K562 (cell line): ENCODE measurements at regions of chr2 and their contacts with region 1.

Region 1: DNA sequence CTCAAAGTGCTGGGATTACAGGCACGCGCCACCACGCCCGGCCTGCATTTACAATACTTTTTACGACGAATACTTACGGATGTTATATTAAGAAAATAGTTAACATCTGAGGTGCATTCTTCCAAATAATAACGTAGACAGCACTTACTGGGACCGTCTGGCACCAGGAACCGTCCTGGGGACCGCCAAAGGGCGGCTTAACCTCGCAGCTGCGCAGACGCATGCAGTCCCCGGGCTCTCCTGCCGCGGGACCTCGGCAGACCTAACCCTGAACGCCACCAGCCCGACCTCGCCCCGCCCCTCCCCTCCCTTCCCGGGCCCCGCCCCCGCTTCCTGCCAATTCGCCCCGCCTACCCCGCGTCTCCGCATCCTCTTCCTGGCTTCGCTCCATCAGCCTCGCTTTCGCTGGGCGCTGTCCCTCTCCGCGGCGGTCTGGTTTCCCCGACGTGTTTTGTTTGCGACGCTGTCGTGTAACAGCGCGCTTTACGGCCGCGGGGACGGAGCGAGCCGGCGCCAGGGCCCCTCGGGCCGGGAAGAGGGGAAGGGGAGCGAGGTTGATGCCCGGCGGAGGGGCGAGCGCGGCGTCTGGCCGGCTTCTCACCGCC is at the start of gene CNOT11:
- DNase-seq: peak; percentile 95 to 98 (median 96)
- ATAC-seq: peak; percentile 96
- H3K4me3 ChIP-seq: peak within 1 kb of the TSS; percentile 97
- H3K27ac ChIP-seq: peak within 1 kb of the TSS; percentile 89
- H3K4me1 ChIP-seq: peaks cover 22 to 24% of the 10 kb centered on the region in 2 experiments
- H3K27me3 ChIP-seq: no peaks in the 10 kb centered on the region
- CTCF ChIP-seq: no peak
- EP300 ChIP-seq: no peak
- POLR2A ChIP-seq: peak; percentile 96
- RAD21 ChIP-seq: peak in 1 of 2 experiments; percentile 6; a peak in 1 of 4 replicates
- polyA plus RNA-seq, gene CNOT11: 12.7 to 13.2 TPM

Region 2: GRCh38 chr2:101151141-101151858 is 101.2 kb before region 1 on chr2 and contains the start of gene TBC1D8:
- CTCF ChIA-PET with region 1: no interaction called
- POLR2A ChIA-PET with region 1: no interaction called
- in situ Hi-C with region 1: no loop called
- intact Hi-C with region 1: loop called (anchors 5 kb)
- DNase-seq: peak; percentile 84 to 97 (median 94)
- ATAC-seq: peak; percentile 92
- H3K4me3 ChIP-seq: peak within 1 kb of the TSS; percentile 50
- H3K27ac ChIP-seq: no peak within 1 kb of the TSS
- H3K4me1 ChIP-seq: peaks cover 2 to 15% of the 10 kb centered on the region in 2 experiments; a peak in 4 of 5 replicates
- H3K27me3 ChIP-seq: peaks cover 41 to 64% of the 10 kb centered on the region in 2 experiments
- CTCF ChIP-seq: no peak
- EP300 ChIP-seq: no peak
- POLR2A ChIP-seq: peak; percentile 57
- RAD21 ChIP-seq: 0 out of 4 replicates have a peak, but pooled peaks of 1 of the 2 experiments have one; percentile 10
- polyA plus RNA-seq, gene TBC1D8: 0.41 to 0.70 TPM

Region 3: DNA sequence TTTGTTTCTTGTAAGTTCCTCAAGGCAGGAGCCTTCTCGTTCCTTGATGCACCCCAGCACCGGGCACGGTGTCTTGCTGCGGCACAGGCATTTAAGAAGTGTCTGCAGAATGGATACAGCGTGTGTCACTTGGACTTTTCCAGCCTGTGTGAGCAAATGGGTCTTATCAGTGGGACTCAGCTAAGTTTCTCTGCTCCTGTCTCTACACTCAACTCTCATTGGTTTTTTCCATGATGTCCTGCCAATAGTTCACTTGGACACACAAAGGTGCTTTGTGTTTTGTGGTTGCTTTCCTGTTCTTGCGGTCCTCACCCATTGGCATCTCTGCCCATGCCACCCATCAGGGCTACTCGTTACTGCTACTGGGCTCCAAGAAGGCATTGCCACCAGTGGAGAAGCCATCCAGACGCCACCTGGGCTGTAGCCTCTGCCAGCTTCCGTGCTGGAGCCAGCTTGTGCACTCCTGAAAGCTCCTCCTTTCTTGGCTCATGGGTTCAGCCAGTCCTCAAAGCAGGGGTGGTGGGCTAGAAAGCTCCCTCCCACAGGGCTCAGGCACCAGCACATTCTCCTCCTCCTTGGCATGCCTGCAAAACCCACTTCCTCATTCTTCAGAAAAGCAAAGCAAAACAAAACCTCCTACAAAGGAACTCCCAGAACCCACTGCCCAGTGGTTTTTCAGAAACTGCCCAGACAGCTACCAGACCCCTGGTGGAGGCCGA is 780.7 kb after region 1 on chr2:
- CTCF ChIA-PET with region 1: no interaction called
- POLR2A ChIA-PET with region 1: no interaction called
- in situ Hi-C with region 1: no loop called
- intact Hi-C with region 1: no loop called
- DNase-seq: peak in 1 of 4 experiments; percentile 28
- ATAC-seq: peak; percentile 60
- H3K4me3 ChIP-seq: no peak overlapping the region
- H3K27ac ChIP-seq: no peak overlapping the region
- H3K4me1 ChIP-seq: peaks cover 8 to 21% of the 10 kb centered on the region in 2 experiments; a peak in 4 of 5 replicates
- H3K27me3 ChIP-seq: no peaks in the 10 kb centered on the region
- CTCF ChIP-seq: no peak
- EP300 ChIP-seq: no peak
- POLR2A ChIP-seq: no peak
- RAD21 ChIP-seq: no peak